ENCODE measurements at regions of chr7 and their contacts with region 1.

Region 1: GRCh38 chr7:105849122-105849855 is 27.1 kb downstream of the ATXN7L1 start:
- DNase-seq: peak; percentile 90
- H3K4me3 Mint-ChIP-seq: peak overlapping the region; percentile 23
- H3K27ac Mint-ChIP-seq: peak overlapping the region; percentile 59
- H3K4me1 Mint-ChIP-seq: peaks cover 44% of the 10 kb centered on the region
- H3K27me3 Mint-ChIP-seq: peaks cover 1% of the 10 kb centered on the region

Region 2: DNA sequence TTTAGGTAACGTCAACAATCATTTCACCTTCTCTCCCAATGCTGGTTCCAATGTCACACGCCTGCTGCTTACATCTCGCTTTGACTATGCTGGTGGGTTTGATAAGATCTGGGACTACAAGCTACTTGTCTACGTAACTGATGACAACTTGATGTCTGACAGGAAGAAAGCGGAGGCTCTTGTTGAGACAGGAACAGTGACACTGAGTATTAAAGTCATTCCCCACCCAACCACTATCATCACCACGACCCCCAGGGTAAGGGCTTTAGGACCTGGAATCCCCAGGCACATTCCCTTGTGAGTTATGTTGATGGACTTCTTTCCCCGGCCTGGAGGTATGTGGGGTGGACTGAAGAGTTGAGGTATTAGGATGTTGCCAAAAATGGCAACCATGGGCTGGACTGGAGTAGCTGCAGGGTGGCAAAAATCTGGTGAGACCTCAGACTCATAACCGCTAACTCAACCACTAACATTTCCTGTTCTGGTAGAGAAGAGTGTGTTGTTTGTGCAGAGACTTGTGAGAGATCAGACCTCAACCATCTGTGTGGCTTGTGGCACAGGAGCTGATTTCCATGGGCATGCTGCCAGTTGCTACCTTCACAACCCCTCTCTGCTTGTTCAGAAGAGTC is 173.0 kb after region 1 on chr7:
- intact Hi-C with region 1: loop called (anchors 2 kb)
- DNase-seq: peak; percentile 88
- H3K4me3 Mint-ChIP-seq: peak overlapping the region; percentile 63
- H3K27ac Mint-ChIP-seq: peak overlapping the region; percentile 83
- H3K4me1 Mint-ChIP-seq: peaks cover 56% of the 10 kb centered on the region
- H3K27me3 Mint-ChIP-seq: peaks cover 5% of the 10 kb centered on the region